ENCODE measurements at regions of chr1 and their contacts with region 1.

Region 1: DNA sequence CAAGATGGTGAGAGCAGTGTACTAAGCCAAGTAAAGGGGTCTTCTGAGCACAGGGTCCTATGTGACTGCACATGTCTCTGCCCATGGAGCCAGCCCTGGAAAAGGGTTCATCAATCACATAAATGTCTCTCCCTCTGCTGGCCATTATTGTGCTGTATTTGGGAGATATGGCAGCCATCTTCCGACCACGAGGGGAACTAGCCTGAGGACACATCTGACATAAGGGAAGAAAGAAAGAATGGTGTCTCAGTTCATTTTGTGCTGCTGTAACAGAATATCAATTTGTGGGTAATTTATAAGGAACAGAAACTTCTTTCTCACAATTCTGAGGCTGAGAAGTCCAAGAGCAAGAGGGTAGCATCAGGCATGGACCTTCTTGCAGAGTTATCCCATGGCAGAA is 55.1 kb upstream of the GJA5 start:
- DNase-seq: no peak
- H3K4me3 Mint-ChIP-seq: no peak overlapping the region
- H3K27ac Mint-ChIP-seq: no peak overlapping the region
- H3K4me1 Mint-ChIP-seq: no peaks in the 10 kb centered on the region
- H3K27me3 Mint-ChIP-seq: no peaks in the 10 kb centered on the region
- CTCF ChIP-seq: no peak

Region 2: GRCh38 chr1:147762233-147763024 is 53.1 kb before region 1 on chr1:
- CTCF ChIA-PET with region 1: no interaction called
- intact Hi-C with region 1: loop called (anchors 10 kb)
- DNase-seq: no peak
- H3K4me3 Mint-ChIP-seq: no peak overlapping the region
- H3K27ac Mint-ChIP-seq: peak overlapping the region; percentile 3
- H3K4me1 Mint-ChIP-seq: peaks cover 24% of the 10 kb centered on the region
- H3K27me3 Mint-ChIP-seq: no peaks in the 10 kb centered on the region
- CTCF ChIP-seq: no peak

Region 3: GRCh38 chr1:147912553-147912952 is 97.1 kb after region 1 on chr1:
- CTCF ChIA-PET with region 1: no interaction called
- intact Hi-C with region 1: no loop called
- DNase-seq: no peak
- H3K4me3 Mint-ChIP-seq: no peak overlapping the region
- H3K27ac Mint-ChIP-seq: no peak overlapping the region
- H3K4me1 Mint-ChIP-seq: no peaks in the 10 kb centered on the region
- H3K27me3 Mint-ChIP-seq: peaks cover 54% of the 10 kb centered on the region
- CTCF ChIP-seq: no peak

Region 4: DNA sequence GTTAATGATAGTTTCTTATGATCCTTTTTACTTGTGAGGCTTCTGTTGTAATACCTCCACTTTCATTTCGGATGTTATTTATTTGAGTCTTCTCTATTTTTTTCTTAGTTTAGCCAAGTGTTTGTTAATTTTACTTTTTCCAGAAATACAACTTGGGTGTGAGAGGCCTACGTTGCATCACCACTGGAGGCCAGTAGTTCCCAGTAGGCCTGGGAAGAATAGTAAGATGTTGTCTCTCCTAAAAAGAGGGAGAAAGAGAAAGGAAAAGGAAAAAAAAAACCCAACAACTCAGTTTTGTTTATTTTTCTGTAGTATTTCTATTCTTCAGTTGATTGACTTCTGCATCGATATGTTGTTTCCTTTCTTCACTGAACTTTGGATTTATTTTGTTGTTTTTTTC is 523.8 kb after region 1 on chr1:
- CTCF ChIA-PET with region 1: no interaction called
- intact Hi-C with region 1: no loop called
- DNase-seq: no peak
- H3K4me3 Mint-ChIP-seq: no peak overlapping the region
- H3K27ac Mint-ChIP-seq: no peak overlapping the region
- H3K4me1 Mint-ChIP-seq: peaks cover 12% of the 10 kb centered on the region
- H3K27me3 Mint-ChIP-seq: peaks cover 44% of the 10 kb centered on the region
- CTCF ChIP-seq: no peak